ENCODE measurements at regions of chr3 and their contacts with region 1.

Region 1: DNA sequence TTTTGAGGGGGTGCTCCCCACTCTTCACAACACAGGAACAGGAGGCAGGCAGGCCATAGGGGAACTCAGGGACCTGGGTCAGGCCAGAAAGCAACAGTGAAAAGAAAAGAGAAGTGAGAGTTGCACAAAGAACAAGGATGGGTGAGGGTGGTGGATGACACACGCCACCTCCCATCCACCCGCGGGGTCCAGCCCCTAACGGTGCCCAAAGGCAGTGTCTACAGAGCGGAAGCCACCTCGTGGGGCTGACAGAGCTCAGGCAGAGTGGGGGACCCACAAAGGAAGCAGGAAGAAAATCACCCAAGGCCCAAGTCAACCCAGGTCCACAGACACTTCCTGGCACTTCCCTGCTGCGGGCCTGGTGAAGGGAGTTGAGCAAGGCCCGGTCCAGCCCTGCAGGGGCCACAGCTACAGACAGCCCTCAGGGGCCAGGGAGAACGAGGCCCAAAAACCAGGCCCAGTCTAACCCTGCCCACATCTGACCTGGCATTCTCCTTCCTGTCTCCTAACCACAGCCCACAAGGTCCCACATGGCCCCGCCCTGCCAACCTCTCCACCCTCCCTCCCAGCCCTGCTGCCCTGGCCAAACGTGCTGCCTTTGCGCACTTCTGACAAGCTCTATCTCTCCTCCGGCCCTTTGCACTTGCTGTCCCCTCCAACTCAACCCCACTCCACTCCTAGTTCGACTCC is 5.9 kb downstream of the NUP210 start:
- DNase-seq: peak; percentile 48 to 85 (median 74)
- ATAC-seq: peak; percentile 91 to 93
- H3K4me3 Mint-ChIP-seq: peak overlapping the region; percentile 65 to 93 (median 88)
- H3K27ac Mint-ChIP-seq: peak overlapping the region; percentile 91 to 99 (median 96)
- H3K4me1 Mint-ChIP-seq: peaks cover 31 to 80% (median 67%) of the 10 kb centered on the region in 4 donors
- H3K27me3 Mint-ChIP-seq: no peaks in the 10 kb centered on the region

Region 2: DNA sequence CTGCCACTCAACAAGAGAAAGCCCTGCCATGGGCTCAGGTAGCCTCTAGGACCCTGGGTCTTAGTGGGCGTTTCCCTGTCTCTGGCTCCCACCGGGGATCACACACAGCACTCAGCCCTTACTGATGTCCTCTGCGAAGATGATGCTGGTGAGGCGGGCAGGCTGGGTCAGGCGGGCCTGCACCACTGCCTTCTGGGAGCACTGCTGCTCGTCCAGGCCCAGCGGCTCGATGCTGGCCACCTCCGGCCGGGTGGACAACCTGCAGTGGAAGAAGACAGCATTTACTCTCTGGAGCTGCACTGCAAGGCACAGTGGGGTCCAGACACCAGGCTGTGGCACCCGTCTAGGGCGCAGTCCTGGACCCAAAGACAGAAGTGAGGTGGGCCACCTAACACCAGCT is 14.6 kb before region 1 on chr3:
- POLR2A ChIA-PET with region 1: no interaction called
- DNase-seq: no peak
- ATAC-seq: no peak
- H3K4me3 Mint-ChIP-seq: no peak overlapping the region
- H3K27ac Mint-ChIP-seq: peak overlapping the region in 1 of 10 donors; percentile 51
- H3K4me1 Mint-ChIP-seq: peaks cover 15 to 52% (median 30%) of the 10 kb centered on the region in 4 donors
- H3K27me3 Mint-ChIP-seq: no peaks in the 10 kb centered on the region

Region 3: DNA sequence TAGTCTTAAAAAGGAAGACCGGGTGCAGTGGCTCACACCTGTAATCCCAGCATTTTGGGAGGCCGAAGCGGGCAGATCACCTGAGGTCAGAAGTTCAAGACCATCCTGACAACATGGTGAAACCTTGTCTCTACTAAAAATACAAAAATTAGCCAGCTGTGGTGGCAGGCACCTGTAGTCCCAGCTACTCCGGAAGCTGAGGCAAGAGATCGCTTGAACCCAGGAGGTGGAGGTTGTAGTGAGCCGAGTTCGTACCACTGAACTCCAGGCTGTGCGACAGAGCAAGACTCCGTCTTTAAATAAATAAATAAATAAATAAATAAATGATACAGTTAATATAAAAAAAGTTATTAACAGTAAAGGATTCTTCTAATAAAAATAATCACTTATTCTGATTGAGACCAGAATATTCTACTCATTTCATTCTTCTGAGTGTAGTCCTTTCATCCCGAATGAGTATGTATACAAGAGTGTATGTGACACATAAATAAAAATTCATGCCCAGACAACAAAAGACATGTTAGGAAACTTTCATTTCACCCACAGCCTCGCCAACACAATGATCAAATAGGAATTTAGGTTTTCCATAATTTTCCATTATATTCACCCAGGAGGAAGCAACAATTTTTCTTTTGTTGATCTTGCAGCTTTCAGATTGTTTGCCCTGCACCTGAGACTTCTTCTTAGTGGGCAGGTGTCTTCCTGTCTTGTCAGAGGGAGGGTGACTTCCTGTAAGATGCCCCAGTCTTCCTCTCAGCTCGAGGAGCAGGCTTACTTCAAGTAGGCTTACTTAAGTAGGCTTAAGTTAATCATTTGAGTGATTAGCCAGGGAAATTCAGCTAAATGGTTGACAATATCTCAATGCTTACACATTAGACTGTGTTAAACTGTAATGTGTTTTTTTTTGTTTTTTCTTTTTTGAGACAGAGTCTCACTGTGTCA is 13.7 kb after region 1 on chr3:
- POLR2A ChIA-PET with region 1: interaction called, 28 read pairs
- DNase-seq: peak in 8 of 10 donors; percentile 16 to 70 (median 46)
- ATAC-seq: peak; percentile 100
- H3K4me3 Mint-ChIP-seq: peak overlapping the region; percentile 6 to 80 (median 70)
- H3K27ac Mint-ChIP-seq: peak overlapping the region; percentile 88 to 95 (median 92)
- H3K4me1 Mint-ChIP-seq: peaks cover 9 to 51% (median 32%) of the 10 kb centered on the region in 4 donors
- H3K27me3 Mint-ChIP-seq: no peaks in the 10 kb centered on the region

Measured in naive thymus-derived CD8-positive, alpha-beta T cell (primary cell).